ENCODE measurements at regions of chrX and their contacts with region 1.

Region 1: GRCh38 chrX:26597981-26598380 is 382.0 kb downstream of the MAGEB5 start:
- DNase-seq: no peak
- ATAC-seq: no peak
- H3K4me3 ChIP-seq: no peak overlapping the region
- H3K4me3 Mint-ChIP-seq: no peak overlapping the region
- H3K27ac ChIP-seq: no peak overlapping the region
- H3K27ac Mint-ChIP-seq: no peak overlapping the region
- H3K4me1 ChIP-seq: no peaks in the 10 kb centered on the region
- H3K4me1 Mint-ChIP-seq: no peaks in the 10 kb centered on the region
- H3K27me3 ChIP-seq: no peaks in the 10 kb centered on the region
- H3K27me3 Mint-ChIP-seq: no peaks in the 10 kb centered on the region

Region 2: GRCh38 chrX:26334232-26334631 is 263.7 kb before region 1 on chrX:
- CTCF ChIA-PET with region 1: interaction called in 1 of 2 experiments, 11 read pairs
- POLR2A ChIA-PET with region 1: no interaction called
- DNase-seq: no peak
- ATAC-seq: no peak
- H3K4me3 ChIP-seq: no peak overlapping the region
- H3K4me3 Mint-ChIP-seq: no peak overlapping the region
- H3K27ac ChIP-seq: no peak overlapping the region
- H3K27ac Mint-ChIP-seq: no peak overlapping the region
- H3K4me1 ChIP-seq: no peaks in the 10 kb centered on the region
- H3K4me1 Mint-ChIP-seq: no peaks in the 10 kb centered on the region
- H3K27me3 ChIP-seq: no peaks in the 10 kb centered on the region
- H3K27me3 Mint-ChIP-seq: no peaks in the 10 kb centered on the region

Region 3: GRCh38 chrX:26557691-26558321 is 40.2 kb before region 1 on chrX:
- CTCF ChIA-PET with region 1: no interaction called
- POLR2A ChIA-PET with region 1: no interaction called
- DNase-seq: no peak
- ATAC-seq: no peak
- H3K4me3 ChIP-seq: no peak overlapping the region
- H3K4me3 Mint-ChIP-seq: no peak overlapping the region
- H3K27ac ChIP-seq: no peak overlapping the region
- H3K27ac Mint-ChIP-seq: no peak overlapping the region
- H3K4me1 ChIP-seq: no peaks in the 10 kb centered on the region
- H3K4me1 Mint-ChIP-seq: no peaks in the 10 kb centered on the region
- H3K27me3 ChIP-seq: no peaks in the 10 kb centered on the region
- H3K27me3 Mint-ChIP-seq: no peaks in the 10 kb centered on the region

Region 4: DNA sequence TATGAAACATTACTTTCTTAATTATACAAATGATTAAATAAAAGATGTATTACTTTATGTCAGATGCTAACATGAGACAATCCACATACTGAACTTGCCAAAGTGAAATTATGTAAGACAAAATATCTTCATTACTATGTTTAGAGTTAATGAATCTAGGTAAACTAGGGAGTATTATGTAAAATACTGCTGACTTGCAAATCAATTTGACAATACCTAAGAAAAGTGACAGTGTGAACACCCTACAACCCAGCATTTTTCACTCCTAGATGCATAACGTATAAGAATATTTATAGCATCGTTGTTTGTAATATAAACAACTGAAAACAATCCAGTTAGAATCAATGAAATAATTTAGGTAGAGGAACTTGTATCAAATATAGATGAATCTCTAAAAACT is 164.3 kb after region 1 on chrX:
- CTCF ChIA-PET with region 1: no interaction called
- POLR2A ChIA-PET with region 1: no interaction called
- DNase-seq: no peak
- ATAC-seq: no peak
- H3K4me3 ChIP-seq: no peak overlapping the region
- H3K4me3 Mint-ChIP-seq: no peak overlapping the region
- H3K27ac ChIP-seq: no peak overlapping the region
- H3K27ac Mint-ChIP-seq: no peak overlapping the region
- H3K4me1 ChIP-seq: no peaks in the 10 kb centered on the region
- H3K4me1 Mint-ChIP-seq: no peaks in the 10 kb centered on the region
- H3K27me3 ChIP-seq: no peaks in the 10 kb centered on the region
- H3K27me3 Mint-ChIP-seq: no peaks in the 10 kb centered on the region

Measured in T-cell (primary cell).